Calu3 (cell line): ENCODE measurements at regions of chr12 and their contacts with region 1.

Region 1: DNA sequence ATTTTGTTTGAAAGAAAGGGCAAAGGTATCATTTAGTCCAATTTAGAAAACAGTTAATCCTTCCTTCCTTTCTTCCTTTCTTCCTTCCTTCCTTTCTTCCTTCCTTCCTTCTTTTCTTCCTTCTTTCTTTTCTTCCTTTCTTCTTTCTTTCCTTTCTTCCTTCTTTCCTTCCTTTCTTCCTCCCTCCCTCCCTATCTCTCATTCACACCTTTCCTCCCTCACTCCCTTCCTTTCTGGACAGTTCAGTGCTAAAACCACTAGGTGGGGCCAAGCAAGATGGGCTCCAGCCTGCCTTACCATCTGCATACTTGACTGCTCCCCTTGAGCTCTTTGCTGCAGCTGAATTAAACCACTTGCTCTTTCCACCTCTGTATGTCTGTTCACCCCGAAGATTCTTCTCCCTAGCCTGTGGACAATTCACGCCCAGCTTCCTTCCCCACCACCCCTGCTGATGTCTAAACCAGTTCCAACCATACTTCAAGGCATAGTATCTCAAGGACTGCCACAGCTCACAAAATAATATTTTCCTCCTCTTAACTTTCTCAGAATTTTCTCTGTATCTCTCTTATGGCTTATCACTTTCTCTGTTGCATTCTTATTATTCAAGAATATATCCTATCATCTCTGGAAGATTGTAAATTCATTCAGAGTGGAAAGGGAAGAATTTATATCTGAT is 78.0 kb downstream of the DBX2 start:
- DNase-seq: peak; percentile 6
- H3K4me3 Mint-ChIP-seq: no peak overlapping the region
- H3K27ac Mint-ChIP-seq: no peak overlapping the region
- H3K4me1 Mint-ChIP-seq: no peaks in the 10 kb centered on the region
- H3K27me3 Mint-ChIP-seq: no peaks in the 10 kb centered on the region
- CTCF ChIP-seq: peak; percentile 23

Region 2: DNA sequence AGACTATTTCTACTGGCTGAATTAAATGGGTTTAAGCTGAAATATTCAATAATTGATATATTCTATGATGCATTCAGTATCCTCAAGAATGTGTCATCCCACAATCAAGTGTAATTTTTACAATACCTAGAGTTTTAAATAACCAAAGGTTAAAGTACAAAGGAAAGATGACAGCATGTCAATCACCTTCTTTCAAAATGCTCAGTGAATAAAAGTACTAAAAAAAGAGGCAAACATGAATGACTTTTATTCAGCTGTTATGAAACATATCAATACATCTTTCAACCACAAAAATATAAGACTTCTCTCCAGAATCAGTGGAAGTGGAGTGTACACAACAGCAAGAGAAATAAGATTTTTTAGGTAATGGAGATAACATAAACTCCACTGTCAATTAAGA is 168.8 kb before region 1 on chr12:
- CTCF ChIA-PET with region 1: no interaction called
- intact Hi-C with region 1: no loop called
- DNase-seq: no peak
- H3K4me3 Mint-ChIP-seq: no peak overlapping the region
- H3K27ac Mint-ChIP-seq: no peak overlapping the region
- H3K4me1 Mint-ChIP-seq: no peaks in the 10 kb centered on the region
- H3K27me3 Mint-ChIP-seq: no peaks in the 10 kb centered on the region
- CTCF ChIP-seq: no peak

Region 3: GRCh38 chr12:44960856-44961255 is 12.0 kb before region 1 on chr12:
- CTCF ChIA-PET with region 1: no interaction called
- intact Hi-C with region 1: no loop called
- DNase-seq: peak; percentile 1
- H3K4me3 Mint-ChIP-seq: no peak overlapping the region
- H3K27ac Mint-ChIP-seq: no peak overlapping the region
- H3K4me1 Mint-ChIP-seq: no peaks in the 10 kb centered on the region
- H3K27me3 Mint-ChIP-seq: no peaks in the 10 kb centered on the region
- CTCF ChIP-seq: no peak

Region 4: GRCh38 chr12:45122768-45123380 is 150.0 kb after region 1 on chr12:
- CTCF ChIA-PET with region 1: interaction called, 10 read pairs
- intact Hi-C with region 1: loop called (anchors 1 kb)
- DNase-seq: peak; percentile 4
- H3K4me3 Mint-ChIP-seq: no peak overlapping the region
- H3K27ac Mint-ChIP-seq: no peak overlapping the region
- H3K4me1 Mint-ChIP-seq: no peaks in the 10 kb centered on the region
- H3K27me3 Mint-ChIP-seq: no peaks in the 10 kb centered on the region
- CTCF ChIP-seq: no peak